Spleen (tissue), 13 donors: ENCODE measurements at regions of chr3 and their contacts with region 1.

Region 1: DNA sequence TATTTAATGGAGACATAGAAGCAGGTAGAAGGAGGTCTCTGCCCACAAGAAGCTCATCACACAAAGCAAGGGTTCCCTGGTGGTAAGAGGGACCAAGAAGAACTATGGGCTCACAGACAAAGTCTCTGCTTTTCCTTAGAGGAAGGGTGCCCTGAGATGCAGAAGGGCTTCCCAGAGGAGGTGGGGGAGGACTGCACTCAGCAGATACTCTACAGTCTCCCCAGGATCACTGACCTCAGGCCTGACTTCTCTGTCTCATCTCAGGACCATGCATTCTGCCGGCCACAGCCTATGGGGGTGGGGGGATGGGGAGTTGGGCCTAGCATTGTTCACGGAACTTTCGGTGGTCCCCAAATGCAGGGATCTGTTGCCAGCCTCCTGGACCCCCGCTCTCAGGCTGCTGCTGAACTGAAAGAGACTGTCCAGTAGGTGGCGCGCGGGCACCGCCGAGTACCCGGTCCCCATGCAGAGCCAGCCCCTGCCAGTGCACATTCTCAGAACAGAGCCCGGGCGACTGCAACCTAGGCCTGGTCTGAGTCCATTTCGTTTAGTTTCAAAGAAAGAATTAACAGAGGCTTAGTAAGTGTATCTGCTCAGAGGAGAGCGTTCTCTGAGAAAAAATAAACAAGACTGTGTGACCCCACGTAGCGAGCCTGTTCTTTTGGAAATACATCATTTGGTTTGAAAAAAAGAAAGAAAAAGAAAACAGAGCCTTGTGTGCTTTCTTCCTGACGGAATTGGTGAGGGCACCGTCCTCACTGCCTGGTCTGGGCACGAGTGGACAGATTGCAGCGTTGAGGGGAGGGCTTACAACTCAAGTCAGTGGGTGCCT is 74.1 kb downstream of the LRTM1 start:
- DNase-seq: peak; percentile 87
- H3K4me3 ChIP-seq: no peak overlapping the region
- H3K27ac ChIP-seq: no peak overlapping the region
- H3K4me1 ChIP-seq: peaks cover 0 to 6% (median 0%) of the 10 kb centered on the region in 6 donors
- H3K27me3 ChIP-seq: no peaks in the 10 kb centered on the region
- CTCF ChIP-seq: peak in 10 of 11 experiments; percentile 20 to 79 (median 68)
- POLR2A ChIP-seq: no peak

Region 2: GRCh38 chr3:56251343-56251945 is 1397.7 kb after region 1 on chr3:
- intact Hi-C with region 1: loop called (anchors 10 kb)
- DNase-seq: no peak
- H3K4me3 ChIP-seq: no peak overlapping the region
- H3K27ac ChIP-seq: no peak overlapping the region
- H3K4me1 ChIP-seq: no peaks in the 10 kb centered on the region
- H3K27me3 ChIP-seq: no peaks in the 10 kb centered on the region
- CTCF ChIP-seq: peak in 10 of 11 experiments; percentile 33 to 84 (median 70)
- POLR2A ChIP-seq: no peak